ENCODE measurements at regions of chr3 and their contacts with region 1.

Region 1: DNA sequence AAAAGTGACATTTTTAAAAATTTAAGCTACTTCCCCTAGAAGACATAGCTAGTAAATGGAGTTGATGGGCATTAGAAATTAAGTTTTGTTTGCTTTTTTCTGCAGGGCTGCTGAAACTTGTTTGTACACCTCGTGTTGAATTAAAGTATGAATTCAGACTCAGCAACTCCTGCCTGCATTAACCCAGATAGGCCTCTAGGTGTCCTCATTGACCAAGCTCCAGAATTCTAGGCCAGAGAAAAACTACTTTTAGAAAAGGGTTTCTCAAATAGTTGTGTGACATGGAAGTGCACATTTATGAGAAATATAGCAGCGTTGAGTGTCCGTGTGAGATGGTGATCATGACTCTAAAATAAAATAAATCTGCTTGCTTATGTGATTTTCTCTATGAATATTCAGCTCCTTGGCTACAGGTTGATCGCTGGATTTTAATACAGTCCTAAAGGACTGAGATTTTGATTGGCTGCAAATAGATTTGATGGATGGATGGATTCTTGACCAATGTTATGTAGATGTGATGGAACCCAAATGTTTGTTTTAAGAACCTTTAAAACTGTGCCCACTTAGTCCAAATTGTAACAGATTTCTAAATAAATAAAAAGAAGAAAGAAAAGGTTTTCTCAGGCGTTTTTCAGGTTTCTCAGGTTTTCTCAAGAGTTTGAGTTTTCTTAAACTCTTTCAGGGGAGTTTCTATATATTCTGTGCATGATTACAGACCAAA is 39.4 kb upstream of the LMOD3 start:
- DNase-seq: no peak
- H3K4me3 ChIP-seq: no peak overlapping the region
- H3K27ac ChIP-seq: no peak overlapping the region
- H3K4me1 ChIP-seq: no peaks in the 10 kb centered on the region
- H3K27me3 ChIP-seq: no peaks in the 10 kb centered on the region
- CTCF ChIP-seq: peak; percentile 91 to 96 (median 95)
- EP300 ChIP-seq: no peak
- POLR2A ChIP-seq: no peak

Region 2: DNA sequence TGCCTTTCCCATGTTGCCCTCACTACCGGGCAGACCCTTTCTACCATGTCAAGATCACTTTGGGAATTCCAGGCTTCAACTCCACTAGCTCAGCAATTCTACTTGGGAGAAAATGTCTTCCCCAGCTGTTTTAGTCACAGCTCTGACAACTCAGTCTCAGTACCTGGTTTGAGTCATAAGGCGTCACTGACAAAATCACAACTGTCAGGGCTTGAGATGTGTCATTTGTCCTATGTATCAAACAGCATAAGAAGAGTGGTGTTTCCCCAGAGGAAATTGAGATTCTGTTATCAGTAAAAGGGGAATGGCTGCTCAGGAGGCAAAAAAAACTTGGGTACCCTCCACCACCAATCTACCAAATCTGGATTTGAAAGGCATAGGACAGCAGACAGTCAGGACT is 912.5 kb before region 1 on chr3:
- in situ Hi-C with region 1: no loop called
- intact Hi-C with region 1: no loop called
- DNase-seq: no peak
- H3K4me3 ChIP-seq: no peak overlapping the region
- H3K27ac ChIP-seq: no peak overlapping the region
- H3K4me1 ChIP-seq: no peaks in the 10 kb centered on the region
- H3K27me3 ChIP-seq: no peaks in the 10 kb centered on the region
- CTCF ChIP-seq: no peak
- EP300 ChIP-seq: no peak
- POLR2A ChIP-seq: no peak

Region 3: GRCh38 chr3:69200384-69201068 is 38.8 kb after region 1 on chr3:
- in situ Hi-C with region 1: no loop called
- intact Hi-C with region 1: no loop called
- DNase-seq: peak; percentile 73
- H3K4me3 ChIP-seq: peak overlapping the region in 3 of 4 donors; percentile 28 to 55 (median 38)
- H3K27ac ChIP-seq: peak overlapping the region; percentile 72 to 88 (median 80)
- H3K4me1 ChIP-seq: peaks cover 0 to 30% (median 11%) of the 10 kb centered on the region in 4 donors
- H3K27me3 ChIP-seq: no peaks in the 10 kb centered on the region
- CTCF ChIP-seq: no peak
- EP300 ChIP-seq: no peak
- POLR2A ChIP-seq: peak; percentile 84

Region 4: DNA sequence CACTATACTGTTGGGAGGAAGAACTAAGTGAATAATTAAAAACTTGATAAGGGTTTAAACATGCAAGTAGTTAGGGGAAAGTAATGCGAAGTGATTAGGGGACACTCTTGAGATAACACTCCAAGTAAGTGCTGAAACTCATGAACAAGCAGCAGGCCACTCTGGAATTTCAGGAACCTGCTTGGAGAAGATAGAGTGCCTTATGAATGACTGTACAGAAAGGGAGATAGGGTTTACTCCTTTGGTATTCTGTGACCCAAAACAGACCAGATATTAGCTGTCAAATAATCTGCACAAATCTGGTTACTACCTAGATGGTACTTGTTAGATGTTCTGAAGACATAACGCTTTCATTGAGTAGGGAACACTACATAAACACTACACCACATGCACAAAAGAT is 138.5 kb after region 1 on chr3:
- in situ Hi-C with region 1: loop called (anchors 5 to 25 kb)
- intact Hi-C with region 1: loop called (anchors 5 kb)
- DNase-seq: no peak
- H3K4me3 ChIP-seq: no peak overlapping the region
- H3K27ac ChIP-seq: no peak overlapping the region
- H3K4me1 ChIP-seq: no peaks in the 10 kb centered on the region
- H3K27me3 ChIP-seq: no peaks in the 10 kb centered on the region
- CTCF ChIP-seq: no peak
- EP300 ChIP-seq: no peak
- POLR2A ChIP-seq: no peak

Region 5: DNA sequence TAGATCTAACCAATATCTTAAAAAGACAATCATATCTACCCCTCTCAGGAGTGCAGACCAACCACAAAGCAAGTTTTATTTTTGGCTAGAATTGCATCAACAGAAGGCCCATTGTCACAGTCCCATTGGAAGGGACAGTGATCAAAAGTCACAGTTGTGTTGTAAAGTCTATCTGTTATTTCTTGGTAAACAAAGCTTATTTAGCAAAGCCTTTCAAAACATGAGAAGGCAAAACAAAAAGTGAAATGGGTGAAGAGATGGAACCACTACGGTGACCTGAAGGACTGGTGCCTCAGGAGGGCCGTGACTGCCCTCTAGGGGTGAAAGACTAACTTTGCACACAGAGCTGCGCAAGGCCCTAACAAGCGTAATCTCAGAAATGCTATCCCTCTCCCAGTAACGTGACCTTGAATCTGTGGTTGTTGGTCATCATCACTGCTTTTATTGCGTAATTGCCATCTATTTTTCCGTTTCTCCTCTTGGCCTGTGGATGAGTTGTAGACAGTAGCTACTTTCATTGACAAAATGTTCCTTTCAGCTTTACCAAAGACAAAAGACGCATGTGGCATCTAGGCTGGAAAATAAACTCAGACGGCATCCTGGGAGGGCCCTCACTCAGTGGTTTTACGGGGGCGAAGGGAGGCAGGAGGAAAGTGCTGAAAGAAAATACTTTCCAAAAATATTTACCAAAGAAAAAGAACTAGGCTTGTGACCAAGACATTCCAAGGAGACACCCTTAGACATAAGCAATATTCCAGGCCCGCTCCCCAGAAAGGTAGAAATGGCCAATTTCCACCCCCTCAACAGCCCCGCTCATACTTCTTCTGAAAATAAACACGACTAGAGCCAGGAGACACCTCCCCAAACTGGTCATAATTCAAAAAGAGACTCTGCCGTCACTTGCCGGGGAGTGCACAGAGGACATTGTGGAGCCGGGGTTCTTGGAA is 144.8 kb after region 1 on chr3:
- in situ Hi-C with region 1: loop called (anchors 5 to 25 kb)
- intact Hi-C with region 1: loop called (anchors 5 kb)
- DNase-seq: peak; percentile 72
- H3K4me3 ChIP-seq: no peak overlapping the region
- H3K27ac ChIP-seq: peak overlapping the region in 2 of 4 donors; percentile 44 to 51
- H3K4me1 ChIP-seq: peaks cover 0 to 13% (median 0%) of the 10 kb centered on the region in 4 donors
- H3K27me3 ChIP-seq: no peaks in the 10 kb centered on the region
- CTCF ChIP-seq: peak; percentile 85 to 93 (median 87)
- EP300 ChIP-seq: no peak
- POLR2A ChIP-seq: no peak

Region 6: GRCh38 chr3:69410250-69410649 is 248.5 kb after region 1 on chr3:
- in situ Hi-C with region 1: loop called in 2 of 4 experiments (anchors 10 to 25 kb)
- intact Hi-C with region 1: no loop called
- DNase-seq: peak; percentile 80
- H3K4me3 ChIP-seq: no peak overlapping the region
- H3K27ac ChIP-seq: peak overlapping the region in 1 of 4 donors; percentile 41
- H3K4me1 ChIP-seq: no peaks in the 10 kb centered on the region
- H3K27me3 ChIP-seq: no peaks in the 10 kb centered on the region
- CTCF ChIP-seq: peak; percentile 72 to 81 (median 79)
- EP300 ChIP-seq: no peak
- POLR2A ChIP-seq: no peak

Region 7: GRCh38 chr3:69425261-69425660 is 263.5 kb after region 1 on chr3:
- in situ Hi-C with region 1: loop called in 3 of 4 experiments (anchors 10 to 25 kb)
- intact Hi-C with region 1: no loop called
- DNase-seq: peak; percentile 22
- H3K4me3 ChIP-seq: no peak overlapping the region
- H3K27ac ChIP-seq: no peak overlapping the region
- H3K4me1 ChIP-seq: no peaks in the 10 kb centered on the region
- H3K27me3 ChIP-seq: no peaks in the 10 kb centered on the region
- CTCF ChIP-seq: peak; percentile 27 to 60 (median 44)
- EP300 ChIP-seq: no peak
- POLR2A ChIP-seq: no peak

Region 8: DNA sequence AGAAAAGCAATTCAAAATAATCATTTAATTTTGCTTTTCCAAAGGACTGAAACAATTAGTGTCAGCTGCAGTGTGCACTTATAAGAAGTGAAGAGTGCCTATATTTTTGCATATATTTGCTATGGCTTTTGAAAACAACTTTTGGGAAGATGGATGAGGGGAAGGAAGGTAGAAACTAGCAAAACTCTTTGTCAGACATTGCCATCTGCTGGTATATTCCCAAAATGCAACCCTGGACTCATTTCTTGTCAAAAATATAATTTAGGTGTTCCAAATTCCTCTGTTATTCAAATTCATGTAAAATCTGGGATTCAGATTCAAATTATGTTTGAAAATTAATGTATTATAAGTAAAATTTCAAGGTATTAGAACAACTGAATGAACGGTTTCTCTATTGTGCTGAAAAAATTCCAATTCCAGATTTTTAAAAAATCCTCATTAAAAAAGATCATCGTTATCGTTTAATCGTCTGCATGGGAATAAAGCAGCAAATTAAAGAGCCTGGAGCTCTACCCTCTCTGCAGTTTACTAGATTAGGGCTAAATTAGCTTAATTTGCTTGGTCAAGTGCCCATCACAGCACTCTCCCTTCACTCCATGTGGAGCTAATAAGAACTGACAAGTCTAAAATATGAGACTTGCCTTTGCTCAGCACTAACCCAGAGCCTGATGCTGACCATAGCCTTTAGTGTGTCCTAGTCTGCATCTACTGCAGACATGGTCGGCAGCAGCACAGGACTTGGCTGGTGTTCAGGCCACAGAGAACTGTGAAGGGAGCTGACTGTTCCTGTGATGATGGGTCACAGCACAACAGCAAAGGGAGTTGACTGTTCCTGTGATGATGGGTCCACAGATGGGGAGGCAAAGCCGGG is 509.6 kb after region 1 on chr3:
- in situ Hi-C with region 1: loop called (anchors 10 to 25 kb)
- intact Hi-C with region 1: loop called (anchors 2 kb)
- DNase-seq: no peak
- H3K4me3 ChIP-seq: no peak overlapping the region
- H3K27ac ChIP-seq: no peak overlapping the region
- H3K4me1 ChIP-seq: no peaks in the 10 kb centered on the region
- H3K27me3 ChIP-seq: no peaks in the 10 kb centered on the region
- CTCF ChIP-seq: peak; percentile 61 to 74 (median 72)
- EP300 ChIP-seq: no peak
- POLR2A ChIP-seq: no peak

Region 9: DNA sequence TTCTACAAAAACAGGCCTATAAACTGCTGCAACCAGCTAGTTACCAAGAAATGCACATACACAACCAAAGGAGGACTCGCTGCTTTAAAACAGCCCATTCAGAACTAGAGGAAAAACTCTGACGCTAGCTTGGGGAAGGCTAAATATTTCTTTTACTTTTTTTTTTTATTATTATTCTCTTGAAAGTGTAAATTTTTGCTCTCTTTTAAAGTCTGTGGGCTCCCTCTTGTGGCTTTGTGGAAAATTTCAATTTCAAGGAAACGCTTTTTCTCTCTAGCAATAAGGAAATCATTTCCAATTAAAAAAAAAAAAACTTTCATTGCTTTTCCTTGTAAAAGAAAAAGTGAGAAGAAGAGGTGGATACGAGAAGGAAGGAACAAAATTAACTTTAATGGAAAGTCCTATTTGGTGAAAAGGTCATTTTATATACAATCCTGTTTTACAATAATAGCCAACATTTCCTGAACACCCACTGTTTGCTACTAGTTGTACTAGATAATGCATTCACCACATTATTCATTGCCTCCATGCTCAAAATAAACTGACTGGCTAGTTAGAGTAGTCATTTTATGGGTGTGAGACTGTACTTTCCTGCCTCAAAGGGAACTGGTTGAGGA is 786.6 kb after region 1 on chr3:
- in situ Hi-C with region 1: loop called in 1 of 4 experiments (anchors 25 kb)
- intact Hi-C with region 1: no loop called
- DNase-seq: no peak
- H3K4me3 ChIP-seq: no peak overlapping the region
- H3K27ac ChIP-seq: no peak overlapping the region
- H3K4me1 ChIP-seq: peaks cover 0 to 11% (median 0%) of the 10 kb centered on the region in 4 donors
- H3K27me3 ChIP-seq: no peaks in the 10 kb centered on the region
- CTCF ChIP-seq: peak; percentile 54 to 66 (median 63)
- EP300 ChIP-seq: no peak
- POLR2A ChIP-seq: no peak

Region 10: GRCh38 chr3:70011582-70011981 is 849.8 kb after region 1 on chr3:
- in situ Hi-C with region 1: no loop called
- intact Hi-C with region 1: no loop called
- DNase-seq: no peak
- H3K4me3 ChIP-seq: no peak overlapping the region
- H3K27ac ChIP-seq: no peak overlapping the region
- H3K4me1 ChIP-seq: peaks cover 0 to 6% (median 0%) of the 10 kb centered on the region in 4 donors
- H3K27me3 ChIP-seq: no peaks in the 10 kb centered on the region
- CTCF ChIP-seq: no peak
- EP300 ChIP-seq: no peak
- POLR2A ChIP-seq: no peak

Measured in transverse colon (tissue), 4 donors.